IMR-90 (cell line): ENCODE measurements at regions of chr16 and their contacts with region 1.

Region 1: GRCh38 chr16:57720142-57720575 is 15.4 kb upstream of the KATNB1 start:
- DNase-seq: peak; percentile 50
- ATAC-seq: peak; percentile 97
- H3K4me3 ChIP-seq: no peak overlapping the region
- H3K27ac ChIP-seq: no peak overlapping the region
- H3K4me1 ChIP-seq: no peaks in the 10 kb centered on the region
- H3K27me3 ChIP-seq: peaks cover 32% of the 10 kb centered on the region
- CTCF ChIP-seq: peak; percentile 67
- POLR2A ChIP-seq: no peak
- RAD21 ChIP-seq: peak; percentile 62

Region 2: DNA sequence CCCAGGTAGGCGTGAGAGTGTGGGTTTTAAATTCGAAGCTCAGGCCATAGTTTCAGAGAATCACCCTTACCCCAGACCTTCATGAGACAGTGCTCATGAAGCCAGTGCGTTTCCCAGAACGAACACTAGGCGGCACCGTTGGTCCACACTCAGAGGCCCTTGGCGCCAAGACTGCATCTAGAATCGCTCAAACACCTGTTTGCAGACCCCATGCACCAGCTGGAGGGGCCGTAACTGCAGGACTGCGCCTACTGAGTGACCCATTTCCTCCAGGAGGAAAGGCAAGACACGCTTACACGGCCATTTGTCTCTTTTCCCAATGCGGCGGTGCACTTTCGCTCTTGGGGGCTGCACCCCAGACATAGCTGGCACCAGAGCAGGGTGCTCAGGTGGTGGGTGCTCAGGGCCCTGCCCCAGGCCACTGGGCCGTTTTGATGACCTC is 143.7 kb before region 1 on chr16:
- CTCF ChIA-PET with region 1: interaction called, 6 read pairs
- POLR2A ChIA-PET with region 1: no interaction called
- dilution Hi-C with region 1: no loop called
- in situ Hi-C with region 1: loop called (anchors 5 kb)
- intact Hi-C with region 1: loop called (anchors 1 kb)
- DNase-seq: peak; percentile 55
- ATAC-seq: peak; percentile 98
- H3K4me3 ChIP-seq: no peak overlapping the region
- H3K27ac ChIP-seq: no peak overlapping the region
- H3K4me1 ChIP-seq: no peaks in the 10 kb centered on the region
- H3K27me3 ChIP-seq: peaks cover 19% of the 10 kb centered on the region; the same call in 1 of the 2 replicates
- CTCF ChIP-seq: peak; percentile 96
- POLR2A ChIP-seq: peak; percentile 44; the same call in 1 of the 2 replicates
- RAD21 ChIP-seq: peak; percentile 97

Region 3: GRCh38 chr16:57591086-57591869 is 128.9 kb before region 1 on chr16:
- CTCF ChIA-PET with region 1: no interaction called
- POLR2A ChIA-PET with region 1: no interaction called
- dilution Hi-C with region 1: no loop called
- in situ Hi-C with region 1: no loop called
- intact Hi-C with region 1: loop called (anchors 1 kb)
- DNase-seq: peak; percentile 82
- ATAC-seq: peak; percentile 93
- H3K4me3 ChIP-seq: no peak overlapping the region
- H3K27ac ChIP-seq: peak overlapping the region; percentile 2; the same call in 1 of the 2 replicates
- H3K4me1 ChIP-seq: peaks cover 8% of the 10 kb centered on the region
- H3K27me3 ChIP-seq: 0 out of 2 replicates have a peak, but pooled peaks cover 3% of the 10 kb centered on the region
- CTCF ChIP-seq: peak; percentile 93
- POLR2A ChIP-seq: no peak
- RAD21 ChIP-seq: peak; percentile 83

Region 4: DNA sequence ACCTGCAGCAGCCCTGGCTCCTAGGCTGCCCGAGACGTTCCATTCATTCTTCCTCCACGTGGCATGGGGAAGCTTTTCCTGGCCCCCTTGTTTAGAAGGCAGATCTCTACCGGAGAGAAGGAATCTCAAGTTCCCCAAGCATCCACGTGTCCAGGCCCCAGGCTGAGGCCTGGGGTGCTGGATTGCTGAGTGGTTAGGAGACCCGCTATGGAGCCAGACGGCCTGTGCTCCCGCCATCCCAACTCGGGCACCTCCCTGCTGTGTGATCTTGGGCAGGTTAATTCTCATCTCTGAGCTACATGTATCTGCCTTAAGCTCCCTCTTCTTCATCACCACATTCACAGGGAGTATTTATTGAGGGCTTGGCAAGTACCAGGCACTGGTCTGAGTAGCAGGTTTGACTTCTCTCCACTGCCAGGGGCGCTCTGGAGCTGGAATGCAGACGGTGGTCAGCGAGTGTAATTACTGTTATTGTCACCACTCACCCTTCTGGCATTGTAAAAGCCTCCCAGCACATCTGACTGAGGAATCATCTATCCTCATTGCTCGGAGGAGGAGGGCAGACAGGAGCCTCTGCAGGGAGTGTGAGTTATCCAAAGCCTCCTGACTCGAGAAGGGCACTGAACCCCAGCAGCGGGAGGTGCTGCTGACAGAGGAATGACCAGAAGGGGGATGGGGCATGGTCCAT is 92.8 kb before region 1 on chr16:
- CTCF ChIA-PET with region 1: no interaction called
- POLR2A ChIA-PET with region 1: no interaction called
- dilution Hi-C with region 1: no loop called
- in situ Hi-C with region 1: no loop called
- intact Hi-C with region 1: no loop called
- DNase-seq: peak; percentile 85
- ATAC-seq: peak; percentile 60
- H3K4me3 ChIP-seq: no peak overlapping the region
- H3K27ac ChIP-seq: peak overlapping the region; percentile 58; the same call in 1 of the 2 replicates
- H3K4me1 ChIP-seq: peaks cover 29% of the 10 kb centered on the region
- H3K27me3 ChIP-seq: no peaks in the 10 kb centered on the region
- CTCF ChIP-seq: peak; percentile 54
- POLR2A ChIP-seq: peak; percentile 21; the same call in 1 of the 2 replicates
- RAD21 ChIP-seq: peak; percentile 41

Region 5: DNA sequence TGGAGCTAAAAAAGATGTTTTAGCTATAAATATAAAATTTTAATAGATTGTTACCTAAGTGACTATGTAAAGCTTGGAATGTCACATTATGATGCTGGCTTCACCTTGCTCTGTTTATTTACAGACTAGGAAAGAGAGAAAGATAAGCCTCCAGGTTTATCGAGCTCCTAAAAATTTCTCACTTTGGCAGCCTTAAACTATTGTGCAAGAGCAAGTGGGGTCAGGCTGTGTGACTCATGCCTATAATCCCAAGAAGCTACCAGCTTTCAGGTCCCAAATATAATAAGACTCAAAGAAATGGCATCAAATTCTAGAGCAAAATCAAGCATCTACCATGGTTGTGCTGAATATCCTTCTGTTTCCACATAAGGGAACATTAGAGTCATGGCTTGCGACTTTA is 609.0 kb after region 1 on chr16:
- CTCF ChIA-PET with region 1: no interaction called
- POLR2A ChIA-PET with region 1: no interaction called
- dilution Hi-C with region 1: no loop called
- in situ Hi-C with region 1: no loop called
- intact Hi-C with region 1: no loop called
- DNase-seq: peak; percentile 7
- ATAC-seq: no peak
- H3K4me3 ChIP-seq: no peak overlapping the region
- H3K27ac ChIP-seq: no peak overlapping the region
- H3K4me1 ChIP-seq: no peaks in the 10 kb centered on the region
- H3K27me3 ChIP-seq: peaks cover 16% of the 10 kb centered on the region
- CTCF ChIP-seq: no peak
- POLR2A ChIP-seq: no peak
- RAD21 ChIP-seq: no peak